ENCODE measurements at regions of chr7 and their contacts with region 1.

Region 1: DNA sequence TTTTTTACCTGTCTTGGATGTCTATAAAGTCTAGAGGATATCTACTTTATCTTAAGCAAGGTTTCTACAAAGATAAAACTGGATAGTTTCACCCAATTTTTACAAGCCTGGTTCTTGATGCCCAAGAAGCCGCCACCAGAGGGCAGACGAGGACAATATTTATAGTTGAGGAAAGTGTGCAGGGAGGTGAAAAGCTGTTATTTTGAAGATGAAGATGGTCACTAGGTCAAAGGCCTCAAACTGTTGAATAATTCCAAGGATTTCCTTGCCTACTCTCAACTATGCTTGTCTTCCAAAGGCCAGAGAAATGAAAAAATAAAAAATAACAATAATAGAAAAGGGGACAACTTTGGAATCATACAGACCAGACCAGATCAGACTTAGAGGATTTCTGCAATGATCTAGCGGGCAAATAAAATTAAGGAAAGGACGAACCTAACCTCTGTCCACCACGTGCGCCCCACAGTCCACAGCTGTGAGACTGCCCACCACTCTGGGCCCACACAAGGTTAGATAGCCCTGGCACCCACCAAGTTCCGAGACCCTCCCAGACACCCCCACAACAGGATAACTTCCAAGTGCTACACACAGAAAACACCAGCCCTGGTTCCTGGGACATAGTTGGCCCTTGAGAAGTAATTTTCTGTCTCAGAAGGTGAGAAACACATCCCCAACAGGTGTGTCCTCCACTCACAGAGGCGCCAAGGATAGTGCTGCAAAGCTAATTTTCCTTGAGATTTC is 2.8 kb downstream of the PKD1L1 start:
- DNase-seq: peak; percentile 64 to 87 (median 84)
- H3K4me3 ChIP-seq: no peak overlapping the region
- H3K27ac ChIP-seq: no peak overlapping the region
- H3K4me1 ChIP-seq: no peaks in the 10 kb centered on the region
- H3K27me3 ChIP-seq: no peaks in the 10 kb centered on the region
- CTCF ChIP-seq: peak; percentile 46 to 65 (median 64)
- EP300 ChIP-seq: no peak
- POLR2A ChIP-seq: no peak

Region 2: DNA sequence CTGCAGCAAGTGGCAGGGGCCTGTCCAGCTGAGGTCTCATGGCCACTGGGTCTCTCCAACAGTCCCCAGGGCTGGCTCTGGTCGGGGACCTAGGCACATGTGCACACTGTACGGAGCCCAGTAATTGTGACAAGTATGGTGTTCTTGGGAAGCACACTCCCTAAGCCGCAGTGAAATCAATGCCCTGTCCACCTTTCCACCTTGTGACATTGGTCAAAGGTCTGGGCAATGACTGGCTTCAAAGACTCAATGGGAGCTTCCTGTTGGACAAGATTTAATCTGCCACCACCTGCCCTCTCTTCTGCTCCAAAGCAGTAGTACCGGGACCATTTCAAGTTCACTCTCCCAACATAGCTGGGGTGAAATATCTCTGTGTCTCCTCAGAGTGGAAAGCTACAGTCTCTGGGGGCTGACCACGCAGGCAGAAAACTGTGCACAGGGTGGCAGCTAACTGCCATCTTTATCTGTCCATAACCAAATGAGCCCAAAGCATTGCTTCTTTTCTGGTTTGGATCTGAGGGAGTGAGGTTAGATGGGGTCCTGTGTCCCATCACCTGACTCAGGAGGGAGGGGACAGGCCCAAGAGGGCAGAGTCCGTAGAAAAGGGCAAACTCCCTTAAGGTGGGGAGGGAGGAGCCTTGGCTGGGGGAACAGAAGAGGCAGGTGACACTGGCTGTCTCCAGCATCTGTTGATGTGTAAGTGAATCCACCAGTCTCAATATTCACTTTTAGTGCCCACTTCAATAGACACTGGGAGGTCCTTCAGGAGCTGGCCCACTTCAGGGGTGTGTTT is 671.3 kb before region 1 on chr7:
- intact Hi-C with region 1: loop called in 1 of 4 experiments (anchors 10 kb)
- DNase-seq: no peak
- H3K4me3 ChIP-seq: no peak overlapping the region
- H3K27ac ChIP-seq: no peak overlapping the region
- H3K4me1 ChIP-seq: no peaks in the 10 kb centered on the region
- H3K27me3 ChIP-seq: no peaks in the 10 kb centered on the region
- CTCF ChIP-seq: no peak
- EP300 ChIP-seq: no peak
- POLR2A ChIP-seq: no peak

Region 3: GRCh38 chr7:47743965-47744591 is 201.4 kb before region 1 on chr7:
- intact Hi-C with region 1: no loop called
- DNase-seq: no peak
- H3K4me3 ChIP-seq: no peak overlapping the region
- H3K27ac ChIP-seq: no peak overlapping the region
- H3K4me1 ChIP-seq: no peaks in the 10 kb centered on the region
- H3K27me3 ChIP-seq: no peaks in the 10 kb centered on the region
- CTCF ChIP-seq: no peak
- EP300 ChIP-seq: no peak
- POLR2A ChIP-seq: no peak

Region 4: DNA sequence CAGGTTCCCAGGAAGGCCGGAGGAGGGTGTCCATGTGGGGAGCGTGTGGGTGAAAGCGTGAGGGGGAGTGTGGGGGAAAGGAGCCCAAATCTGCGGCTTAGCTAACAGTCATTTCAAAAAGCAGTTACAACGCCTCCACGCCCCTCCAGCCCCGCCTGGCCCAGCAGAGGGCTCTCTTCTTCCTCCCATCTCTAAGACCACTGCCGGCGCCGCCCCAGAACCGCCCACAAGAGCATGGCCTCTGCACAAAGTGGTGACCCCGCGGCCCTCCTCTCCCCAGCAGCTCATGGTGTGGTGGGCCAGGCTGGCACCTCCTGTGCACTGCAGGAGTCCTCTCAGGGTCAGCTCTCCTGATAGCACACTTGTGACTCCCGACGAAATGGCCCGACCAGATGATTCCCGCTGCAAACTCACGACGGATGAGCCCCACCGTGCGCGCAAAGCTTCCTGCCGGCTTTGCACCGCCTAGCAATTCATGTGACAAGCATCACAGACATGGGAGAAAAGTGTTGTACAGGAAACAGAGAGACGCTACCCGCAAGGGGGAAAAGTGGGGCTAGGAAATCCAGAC is 46.4 kb after region 1 on chr7:
- intact Hi-C with region 1: loop called in 1 of 4 experiments (anchors 10 kb)
- DNase-seq: peak; percentile 52 to 78 (median 62)
- H3K4me3 ChIP-seq: peak overlapping the region; percentile 37
- H3K27ac ChIP-seq: no peak overlapping the region
- H3K4me1 ChIP-seq: no peaks in the 10 kb centered on the region
- H3K27me3 ChIP-seq: no peaks in the 10 kb centered on the region
- CTCF ChIP-seq: peak in 1 of 3 donors; percentile 47
- EP300 ChIP-seq: no peak
- POLR2A ChIP-seq: no peak

Region 5: DNA sequence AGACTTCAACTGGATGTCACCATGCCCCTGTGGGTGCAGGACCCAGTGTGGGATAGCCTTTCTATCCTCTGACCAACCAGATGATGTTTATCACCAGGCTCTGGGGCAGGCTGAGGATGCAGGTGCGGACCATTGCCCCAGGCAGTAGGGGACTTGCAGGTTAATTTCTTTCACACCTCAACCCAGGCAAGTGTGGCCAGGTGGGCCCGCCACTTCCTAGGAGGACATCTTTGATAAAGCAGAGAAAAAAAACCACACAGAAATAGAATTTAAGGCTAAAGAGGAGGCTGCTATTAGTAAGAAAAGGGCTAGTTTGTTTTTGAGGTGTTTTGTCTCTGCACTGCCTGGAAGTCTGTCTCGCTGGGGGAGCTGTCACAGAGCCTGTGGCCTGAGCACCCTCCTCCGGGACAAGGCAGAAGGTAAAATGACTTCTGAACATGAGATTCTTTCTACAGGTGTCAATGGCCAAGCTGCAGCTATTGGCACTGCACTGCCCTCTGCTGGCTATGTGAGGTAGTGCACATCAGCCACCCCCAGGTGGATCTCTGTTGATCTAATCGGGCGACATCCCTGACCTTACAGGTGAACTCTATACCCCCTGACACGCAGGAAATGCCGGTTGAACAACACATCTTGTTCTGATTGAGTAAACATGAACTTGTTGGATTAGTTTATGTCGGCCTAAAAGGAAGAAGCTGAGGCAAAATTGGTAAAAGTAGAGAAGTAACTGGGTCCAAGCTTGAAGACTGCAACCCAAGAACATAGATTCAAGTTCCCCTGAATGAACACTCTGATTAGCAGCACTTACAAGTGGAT is 164.6 kb after region 1 on chr7:
- intact Hi-C with region 1: loop called in 3 of 4 experiments (anchors 2 to 5 kb)
- DNase-seq: peak; percentile 46 to 78 (median 74)
- H3K4me3 ChIP-seq: no peak overlapping the region
- H3K27ac ChIP-seq: no peak overlapping the region
- H3K4me1 ChIP-seq: no peaks in the 10 kb centered on the region
- H3K27me3 ChIP-seq: no peaks in the 10 kb centered on the region
- CTCF ChIP-seq: peak; percentile 91 to 96 (median 93)
- EP300 ChIP-seq: no peak
- POLR2A ChIP-seq: no peak

Region 6: GRCh38 chr7:48116043-48116442 is 170.6 kb after region 1 on chr7:
- intact Hi-C with region 1: loop called (anchors 2 to 5 kb)
- DNase-seq: no peak
- H3K4me3 ChIP-seq: no peak overlapping the region
- H3K27ac ChIP-seq: no peak overlapping the region
- H3K4me1 ChIP-seq: no peaks in the 10 kb centered on the region
- H3K27me3 ChIP-seq: no peaks in the 10 kb centered on the region
- CTCF ChIP-seq: no peak
- EP300 ChIP-seq: no peak
- POLR2A ChIP-seq: no peak

Measured in ovary (tissue), 10 donors.